ENCODE measurements at regions of chr6 and their contacts with region 1.

Region 1: GRCh38 chr6:27518881-27519795 is 46.2 kb upstream of the ZNF184 start:
- DNase-seq: peak; percentile 60
- H3K4me3 Mint-ChIP-seq: peak overlapping the region; percentile 74
- H3K27ac Mint-ChIP-seq: peak overlapping the region; percentile 4
- H3K4me1 Mint-ChIP-seq: peaks cover 22% of the 10 kb centered on the region
- H3K27me3 Mint-ChIP-seq: peaks cover 30% of the 10 kb centered on the region

Region 2: DNA sequence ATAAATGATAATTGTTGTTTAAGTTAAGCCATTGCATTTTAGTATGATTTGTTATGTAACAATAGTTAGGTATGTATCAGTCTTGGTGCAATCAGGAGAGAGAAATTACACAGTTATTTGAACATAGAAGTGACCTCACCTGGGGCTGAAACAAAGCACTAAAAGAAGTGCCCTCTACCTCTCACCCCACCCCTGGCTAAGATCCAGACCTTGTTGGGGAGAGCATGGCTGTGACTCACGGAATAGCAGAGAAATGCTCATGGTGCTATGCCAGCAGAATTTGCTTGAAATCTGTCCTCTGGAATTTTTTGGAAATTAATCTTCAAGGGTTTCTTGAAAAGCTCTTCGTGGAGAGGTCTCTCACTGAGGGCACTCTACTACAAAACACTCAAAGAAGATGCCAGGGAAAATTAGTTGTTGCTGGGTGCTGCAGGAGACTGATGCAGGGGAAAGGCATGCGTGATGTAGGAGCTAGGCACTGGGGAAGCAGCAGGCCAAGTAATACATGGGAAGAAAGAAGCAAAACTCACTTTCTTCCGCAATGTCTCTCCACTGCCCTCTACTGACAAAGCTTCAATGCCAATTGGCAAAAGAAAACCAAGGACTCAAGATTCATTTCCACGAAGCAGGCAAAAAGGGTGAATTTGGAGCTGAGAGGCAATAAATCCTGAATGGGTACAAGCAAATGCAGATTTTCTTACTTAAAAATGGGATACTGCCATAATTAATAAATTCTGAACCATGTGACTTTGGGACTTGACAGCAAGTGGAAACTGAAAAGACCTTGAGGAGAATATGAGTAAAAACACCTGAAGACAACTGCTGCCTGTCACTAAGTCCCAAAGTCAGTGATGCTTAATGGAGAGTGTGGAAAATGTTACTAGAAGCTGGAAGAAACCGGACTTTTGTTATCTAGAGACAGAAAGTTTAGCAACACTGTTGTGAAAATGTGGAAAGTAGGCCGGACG is 90.1 kb after region 1 on chr6:
- CTCF ChIA-PET with region 1: interaction called, 18 read pairs
- DNase-seq: peak; percentile 30
- H3K4me3 Mint-ChIP-seq: no peak overlapping the region
- H3K27ac Mint-ChIP-seq: no peak overlapping the region
- H3K4me1 Mint-ChIP-seq: peaks cover 14% of the 10 kb centered on the region
- H3K27me3 Mint-ChIP-seq: peaks cover 58% of the 10 kb centered on the region

Region 3: GRCh38 chr6:27753668-27754407 is 234.7 kb after region 1 on chr6:
- CTCF ChIA-PET with region 1: interaction called, 12 read pairs
- DNase-seq: peak; percentile 81
- H3K4me3 Mint-ChIP-seq: peak overlapping the region; percentile 96
- H3K27ac Mint-ChIP-seq: peak overlapping the region; percentile 88
- H3K4me1 Mint-ChIP-seq: peaks cover 46% of the 10 kb centered on the region
- H3K27me3 Mint-ChIP-seq: peaks cover 12% of the 10 kb centered on the region